A673 (cell line): ENCODE measurements at regions of chr20 and their contacts with region 1.

Region 1: DNA sequence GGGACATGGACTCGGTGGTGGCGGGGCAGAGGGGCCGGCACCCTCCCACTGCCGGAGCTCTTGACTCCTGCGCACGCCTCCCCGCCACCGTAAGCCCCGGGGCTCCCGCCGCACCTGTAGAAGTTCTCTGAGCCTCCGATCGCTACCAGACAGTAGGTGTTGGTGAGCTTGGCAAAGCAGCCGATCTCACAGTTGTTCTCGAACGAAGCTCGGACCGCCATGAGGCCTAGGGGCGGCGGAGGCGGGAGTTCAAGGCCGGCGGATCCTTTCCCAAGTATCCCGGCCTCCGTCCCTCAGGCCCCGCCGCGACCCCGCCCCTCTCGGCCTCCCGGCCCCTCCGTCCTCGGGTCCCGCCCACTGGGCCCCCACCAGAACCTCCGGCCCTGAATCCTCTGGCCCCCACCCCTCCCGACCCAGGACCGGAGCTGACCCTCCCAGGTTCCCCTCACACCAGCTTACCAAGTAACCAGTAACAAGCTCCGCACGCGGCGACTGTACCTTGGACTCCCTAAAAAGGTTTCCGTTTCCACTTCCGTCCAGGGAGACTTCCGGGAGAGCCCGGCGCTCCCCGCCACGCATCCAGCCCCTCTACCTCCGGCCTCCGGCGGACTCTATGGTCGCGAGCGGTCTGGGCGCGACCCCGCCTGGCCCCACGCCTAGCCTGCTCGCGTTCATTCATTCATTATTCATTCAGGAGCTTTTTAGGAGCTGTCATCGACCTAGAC is at the start of gene EIF6:
- DNase-seq: peak; percentile 91
- H3K4me3 ChIP-seq: peak within 1 kb of the TSS; percentile 88
- H3K27ac ChIP-seq: peak within 1 kb of the TSS; percentile 74
- H3K4me1 ChIP-seq: peaks cover 7% of the 10 kb centered on the region
- H3K27me3 ChIP-seq: no peaks in the 10 kb centered on the region
- CTCF ChIP-seq: no peak
- total RNA-seq, gene EIF6: 172 and 180 TPM in 2 replicates

Region 2: DNA sequence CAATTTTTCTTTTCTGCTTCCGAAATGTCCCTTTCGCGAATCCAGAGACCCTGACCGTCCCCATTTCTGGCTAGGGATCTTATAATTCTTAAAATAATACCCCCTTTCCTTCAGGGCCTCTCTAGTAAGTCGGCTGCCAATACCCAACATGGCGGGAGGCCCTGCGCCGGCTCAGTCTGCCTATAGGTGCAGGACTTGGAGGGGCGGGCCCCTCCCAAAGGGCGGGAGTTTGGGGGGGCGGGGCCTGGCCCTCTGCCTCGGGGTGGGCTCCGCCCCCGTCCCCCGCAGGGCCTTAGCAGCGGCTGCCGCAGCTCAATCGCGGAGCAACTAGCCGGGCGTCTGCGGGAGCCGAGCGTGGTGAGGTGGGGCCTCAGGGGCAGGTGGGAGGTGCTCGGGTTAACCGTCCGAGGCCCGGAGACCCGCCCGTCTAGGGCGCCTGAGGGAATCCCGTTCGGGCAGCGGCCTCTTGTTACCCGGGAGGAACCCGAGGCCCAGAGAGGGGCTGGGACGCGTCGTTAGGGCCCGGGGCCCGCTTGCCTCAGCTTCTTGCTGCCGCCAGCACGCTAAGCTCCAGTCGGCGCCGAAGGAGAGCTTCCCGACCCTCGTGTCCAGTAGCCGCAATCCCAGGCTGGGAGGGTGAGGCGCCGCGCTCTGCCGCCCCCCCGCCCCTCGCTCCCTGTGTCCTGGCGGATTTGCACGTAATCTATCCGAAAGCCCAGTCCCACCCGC is 170.6 kb after region 1 on chr20 and contains the start of gene CEP250:
- CTCF ChIA-PET with region 1: no interaction called
- POLR2A ChIA-PET with region 1: interaction called, 14 read pairs
- intact Hi-C with region 1: no loop called
- DNase-seq: peak; percentile 97
- H3K4me3 ChIP-seq: peak within 1 kb of the TSS; percentile 89
- H3K27ac ChIP-seq: peak within 1 kb of the TSS; percentile 99
- H3K4me1 ChIP-seq: peaks cover 28% of the 10 kb centered on the region
- H3K27me3 ChIP-seq: no peaks in the 10 kb centered on the region
- CTCF ChIP-seq: no peak
- total RNA-seq, gene CEP250: 56.6 and 59.0 TPM in 2 replicates

Region 3: DNA sequence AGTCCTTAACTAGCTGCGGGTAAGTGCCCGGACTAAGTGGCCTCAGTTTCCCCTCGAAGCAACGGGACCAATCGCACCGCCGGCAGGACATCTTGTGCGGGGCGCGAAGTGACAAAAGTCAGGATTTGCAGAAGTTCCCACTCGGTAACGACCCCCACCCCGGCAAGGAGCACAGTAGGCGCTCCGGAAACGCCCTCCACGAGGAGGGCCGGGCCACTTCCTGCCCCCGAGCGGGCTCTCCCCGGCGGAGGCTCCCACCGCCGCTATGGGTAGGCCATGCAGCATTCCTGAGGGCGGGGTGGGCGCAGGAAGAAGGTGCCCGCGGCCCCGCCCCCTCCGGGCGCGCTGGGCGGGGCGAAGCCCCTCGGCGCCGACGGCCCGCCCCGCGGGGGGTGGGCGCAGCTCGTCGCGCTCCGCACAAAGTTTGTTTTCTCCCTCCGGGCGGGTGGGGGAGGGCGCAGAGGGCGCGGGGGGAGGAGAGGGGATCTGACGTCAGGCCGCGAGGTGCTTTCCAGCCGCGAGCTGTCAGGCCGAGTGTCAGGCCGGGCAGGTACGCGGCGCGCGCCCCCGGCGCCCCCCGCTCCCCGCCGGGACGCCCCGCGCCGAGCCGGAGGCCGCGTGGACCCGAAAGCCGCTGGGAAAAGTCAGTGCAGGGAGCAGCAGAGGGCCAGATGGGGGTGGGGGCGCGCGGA is 1288.8 kb after region 1 on chr20 and contains the start of gene TGIF2:
- CTCF ChIA-PET with region 1: no interaction called
- POLR2A ChIA-PET with region 1: interaction called, 12 read pairs
- intact Hi-C with region 1: no loop called
- DNase-seq: peak; percentile 98
- H3K4me3 ChIP-seq: peak within 1 kb of the TSS; percentile 95
- H3K27ac ChIP-seq: peak within 1 kb of the TSS; percentile 95
- H3K4me1 ChIP-seq: peaks cover 36% of the 10 kb centered on the region
- H3K27me3 ChIP-seq: no peaks in the 10 kb centered on the region
- CTCF ChIP-seq: no peak
- total RNA-seq, gene TGIF2: 54.9 and 59.0 TPM in 2 replicates